Activated CD8-positive, alpha-beta memory T cell treated with anti-CD3 and anti-CD28 coated beads, Interleukin-2, amount 10 ng/mL, durations not matched to agents 7 days and 5 days (primary cell): ENCODE measurements at regions of chr19 and their contacts with region 1.

Region 1: GRCh38 chr19:38557205-38557799 is 60.5 kb downstream of the MAP4K1 start:
- DNase-seq: peak; percentile 91
- ATAC-seq: peak; percentile 75
- H3K4me3 Mint-ChIP-seq: peak overlapping the region; percentile 69
- H3K27ac Mint-ChIP-seq: peak overlapping the region; percentile 95
- H3K4me1 Mint-ChIP-seq: peaks cover 74% of the 10 kb centered on the region
- H3K27me3 Mint-ChIP-seq: peaks cover 7% of the 10 kb centered on the region

Region 2: GRCh38 chr19:38506723-38507550 is 50.4 kb before region 1 on chr19:
- CTCF ChIA-PET with region 1: no interaction called
- DNase-seq: peak; percentile 90
- ATAC-seq: peak; percentile 89
- H3K4me3 Mint-ChIP-seq: no peak overlapping the region
- H3K27ac Mint-ChIP-seq: no peak overlapping the region
- H3K4me1 Mint-ChIP-seq: no peaks in the 10 kb centered on the region
- H3K27me3 Mint-ChIP-seq: peaks cover 22% of the 10 kb centered on the region

Region 3: GRCh38 chr19:38580080-38580479 is 22.8 kb after region 1 on chr19:
- CTCF ChIA-PET with region 1: interaction called, 10 read pairs
- DNase-seq: no peak
- ATAC-seq: no peak
- H3K4me3 Mint-ChIP-seq: no peak overlapping the region
- H3K27ac Mint-ChIP-seq: no peak overlapping the region
- H3K4me1 Mint-ChIP-seq: peaks cover 26% of the 10 kb centered on the region
- H3K27me3 Mint-ChIP-seq: no peaks in the 10 kb centered on the region

Region 4: DNA sequence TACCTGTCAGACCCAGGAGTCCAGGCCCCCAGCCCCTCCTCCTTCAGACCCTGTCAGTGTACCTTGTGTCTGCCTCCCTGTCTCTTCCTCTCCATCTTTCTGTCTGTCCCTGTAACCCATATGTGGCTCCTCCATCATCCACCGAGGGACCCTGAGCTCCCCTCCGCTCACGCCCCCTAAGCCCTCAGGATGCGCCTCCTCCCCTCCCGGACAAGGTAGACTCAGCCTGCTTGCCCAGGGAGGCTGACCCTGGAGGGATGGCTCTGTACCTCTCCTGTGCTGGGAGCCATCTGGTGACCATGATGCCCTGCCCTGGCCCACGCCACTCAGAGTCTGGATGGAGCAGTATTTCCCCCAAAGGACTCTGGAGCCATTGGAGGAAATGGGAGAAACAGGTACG is 188.0 kb after region 1 on chr19:
- CTCF ChIA-PET with region 1: no interaction called
- DNase-seq: no peak
- ATAC-seq: no peak
- H3K4me3 Mint-ChIP-seq: no peak overlapping the region
- H3K27ac Mint-ChIP-seq: no peak overlapping the region
- H3K4me1 Mint-ChIP-seq: no peaks in the 10 kb centered on the region
- H3K27me3 Mint-ChIP-seq: peaks cover 6% of the 10 kb centered on the region